OCI-LY7 (cell line): ENCODE measurements at regions of chr16 and their contacts with region 1.

Region 1: DNA sequence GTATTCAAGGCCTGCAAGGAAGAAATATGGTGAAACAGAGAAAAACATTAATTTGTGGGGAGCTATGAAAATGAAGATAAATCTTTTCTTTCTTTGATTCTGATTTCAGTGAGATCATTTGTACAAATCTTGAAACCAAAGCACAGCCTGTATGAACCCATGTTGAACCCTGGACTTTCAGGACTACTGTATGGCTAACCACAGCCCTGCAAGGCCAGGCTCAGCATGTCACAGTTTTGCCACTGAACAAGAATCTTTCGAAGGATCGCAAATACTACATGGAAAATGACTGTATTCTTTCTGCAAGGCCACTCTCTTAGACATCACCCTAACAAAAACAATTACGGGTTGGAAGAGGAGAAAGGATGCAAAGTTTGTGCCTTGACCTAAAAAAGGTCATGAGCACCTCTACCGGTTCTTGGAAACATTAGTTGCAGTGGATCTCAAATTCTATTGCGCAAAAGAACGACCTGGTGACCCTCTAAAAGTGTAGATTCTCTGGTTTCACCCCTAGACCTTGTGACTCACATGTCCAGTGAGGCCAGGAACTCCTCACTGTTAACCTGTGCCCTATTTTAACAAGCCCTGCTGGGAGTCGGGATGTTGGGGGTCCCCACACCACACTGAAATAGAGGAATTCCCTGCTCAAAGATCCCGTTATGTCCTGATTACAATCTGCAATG is 161.8 kb upstream of the MAF start:
- DNase-seq: no peak
- H3K4me3 ChIP-seq: no peak overlapping the region
- H3K27ac ChIP-seq: no peak overlapping the region
- H3K4me1 ChIP-seq: no peaks in the 10 kb centered on the region
- CTCF ChIP-seq: no peak

Region 2: DNA sequence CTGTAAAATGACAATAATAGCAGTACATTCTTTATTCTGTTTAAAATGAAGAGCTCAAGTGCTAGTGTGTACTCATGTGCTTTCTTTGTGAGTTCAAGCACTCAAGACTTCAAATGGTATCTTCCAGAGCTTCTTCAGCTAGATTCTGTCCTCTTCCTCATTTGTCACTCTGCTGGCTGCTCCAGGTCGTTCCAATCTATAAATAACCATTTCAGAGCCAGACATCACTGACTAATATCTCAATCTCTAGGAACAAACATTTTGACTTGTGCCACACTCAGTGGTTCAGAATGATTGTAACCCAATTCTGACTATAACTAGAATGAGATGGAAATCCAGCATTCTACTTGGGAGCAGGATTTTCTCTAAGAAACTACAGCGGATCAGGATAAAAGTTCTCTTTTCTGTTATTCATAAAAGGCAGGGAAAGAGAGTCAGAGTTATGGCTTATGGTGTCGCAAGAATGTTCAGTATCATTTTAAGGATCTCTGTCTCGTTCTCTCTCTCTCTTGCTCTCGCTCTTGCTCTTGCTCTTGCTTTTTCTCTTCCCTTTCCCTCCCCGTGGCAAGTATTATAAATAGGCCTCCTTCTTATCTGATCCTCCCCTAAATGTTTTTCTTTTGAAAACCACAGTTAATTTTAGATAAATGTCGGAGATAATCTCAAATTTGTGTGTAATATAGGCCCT is 45.6 kb before region 1 on chr16:
- CTCF ChIA-PET with region 1: no interaction called
- POLR2A ChIA-PET with region 1: interaction called, 10 read pairs
- intact Hi-C with region 1: no loop called
- DNase-seq: no peak
- H3K4me3 ChIP-seq: no peak overlapping the region
- H3K27ac ChIP-seq: no peak overlapping the region
- H3K4me1 ChIP-seq: no peaks in the 10 kb centered on the region
- CTCF ChIP-seq: no peak